ENCODE measurements at regions of chr12 and their contacts with region 1.

Region 1: DNA sequence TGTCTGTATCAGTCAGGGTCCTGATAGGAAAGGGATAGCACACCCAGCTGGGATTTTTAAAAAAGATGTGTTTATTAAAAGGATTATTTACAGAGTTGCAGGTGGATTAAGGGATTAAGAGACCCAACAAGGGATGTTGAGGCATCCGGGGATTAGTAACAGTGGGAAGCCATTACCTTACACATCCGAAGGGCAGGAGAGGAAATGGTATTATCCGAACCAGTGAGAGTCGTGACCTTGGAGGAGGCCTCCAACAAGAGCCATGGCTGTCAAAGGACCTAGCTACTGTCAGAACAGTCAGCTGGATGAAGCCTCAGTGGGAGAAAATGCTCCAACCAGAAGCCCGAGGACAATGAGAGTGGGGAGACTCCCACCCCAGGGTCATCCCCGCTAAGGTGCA is 146.3 kb upstream of the KRAS start:
- DNase-seq: no peak
- H3K4me3 ChIP-seq: no peak overlapping the region
- H3K27ac ChIP-seq: no peak overlapping the region
- H3K4me1 ChIP-seq: no peaks in the 10 kb centered on the region
- H3K27me3 ChIP-seq: no peaks in the 10 kb centered on the region

Region 2: GRCh38 chr12:25236626-25237025 is 160.4 kb before region 1 on chr12:
- CTCF ChIA-PET with region 1: interaction called, 6 read pairs
- POLR2A ChIA-PET with region 1: interaction called, 10 read pairs
- DNase-seq: no peak
- H3K4me3 ChIP-seq: no peak overlapping the region
- H3K27ac ChIP-seq: no peak overlapping the region
- H3K4me1 ChIP-seq: no peaks in the 10 kb centered on the region
- H3K27me3 ChIP-seq: no peaks in the 10 kb centered on the region

Region 3: GRCh38 chr12:25295361-25295760 is 101.6 kb before region 1 on chr12:
- CTCF ChIA-PET with region 1: no interaction called
- POLR2A ChIA-PET with region 1: no interaction called
- DNase-seq: peak in 1 of 3 donors; percentile 12
- H3K4me3 ChIP-seq: no peak overlapping the region
- H3K27ac ChIP-seq: no peak overlapping the region
- H3K4me1 ChIP-seq: peaks cover 0 to 5% (median 0%) of the 10 kb centered on the region in 4 experiments
- H3K27me3 ChIP-seq: no peaks in the 10 kb centered on the region

Region 4: DNA sequence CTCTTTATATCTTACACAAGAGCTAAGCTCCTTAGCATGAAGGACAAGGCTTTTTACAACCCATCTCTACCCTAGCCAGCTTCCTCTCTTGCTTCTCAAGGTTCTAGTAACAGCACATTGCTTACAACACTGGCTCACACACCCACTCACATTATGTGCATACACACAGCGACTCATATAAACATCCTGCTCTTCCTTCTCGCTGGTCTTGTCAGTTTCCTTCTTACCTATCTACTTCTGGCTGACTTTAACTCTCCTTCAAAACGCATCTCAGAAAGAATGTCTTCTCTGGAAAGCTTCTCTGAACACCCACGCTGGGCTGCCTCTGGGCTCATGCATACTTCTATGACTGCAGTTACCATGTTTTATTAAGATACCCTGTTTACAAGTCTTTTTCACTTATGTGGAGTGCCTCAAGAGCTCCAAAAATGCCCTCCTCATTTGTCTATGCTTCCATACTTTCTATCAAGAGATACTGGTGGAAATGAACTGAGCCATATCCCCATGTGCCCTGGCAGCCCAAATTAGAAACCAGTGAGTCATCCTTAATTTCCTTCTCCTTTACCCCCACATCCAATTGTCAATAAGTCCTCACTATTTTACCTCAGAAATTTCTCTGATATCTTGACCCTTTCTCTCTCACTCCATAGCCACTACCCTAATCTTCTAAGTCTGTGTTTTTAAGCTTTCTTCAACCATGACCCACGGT is 19.4 kb before region 1 on chr12:
- CTCF ChIA-PET with region 1: no interaction called
- POLR2A ChIA-PET with region 1: no interaction called
- DNase-seq: peak in 1 of 3 donors; percentile 20
- H3K4me3 ChIP-seq: no peak overlapping the region
- H3K27ac ChIP-seq: no peak overlapping the region
- H3K4me1 ChIP-seq: peaks cover 0 to 10% (median 9%) of the 10 kb centered on the region in 4 experiments
- H3K27me3 ChIP-seq: no peaks in the 10 kb centered on the region